ENCODE measurements at regions of chr2 and their contacts with region 1.

Region 1: GRCh38 chr2:232142049-232142448 is 180.5 kb downstream of the DIS3L2 start:
- DNase-seq: peak; percentile 19
- H3K4me3 Mint-ChIP-seq: no peak overlapping the region
- H3K27ac Mint-ChIP-seq: no peak overlapping the region
- H3K4me1 Mint-ChIP-seq: no peaks in the 10 kb centered on the region
- H3K27me3 Mint-ChIP-seq: no peaks in the 10 kb centered on the region
- CTCF ChIP-seq: peak; percentile 55

Region 2: DNA sequence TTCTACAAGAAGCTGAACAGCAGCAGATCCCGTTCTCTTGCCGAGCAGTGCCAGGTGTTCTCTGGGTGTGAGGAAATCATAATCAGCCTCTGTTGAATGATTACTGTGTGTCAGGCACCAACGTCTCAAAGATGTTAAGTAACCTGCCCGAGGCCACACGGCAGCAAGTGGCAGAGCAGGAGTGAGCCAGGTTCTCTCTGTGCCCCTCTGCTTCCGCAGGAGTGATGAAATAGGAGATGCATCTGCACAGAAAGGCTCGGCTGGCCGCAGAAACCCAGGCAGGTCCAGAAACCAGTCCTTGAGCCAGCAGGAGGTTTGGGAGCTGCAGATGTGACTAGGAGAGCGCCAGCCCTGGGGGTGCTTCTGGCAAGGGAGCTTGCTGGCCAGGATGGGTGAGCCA is 287.4 kb before region 1 on chr2:
- CTCF ChIA-PET with region 1: no interaction called
- intact Hi-C with region 1: loop called (anchors 5 kb)
- DNase-seq: no peak
- H3K4me3 Mint-ChIP-seq: no peak overlapping the region
- H3K27ac Mint-ChIP-seq: no peak overlapping the region
- H3K4me1 Mint-ChIP-seq: no peaks in the 10 kb centered on the region
- H3K27me3 Mint-ChIP-seq: peaks cover 54% of the 10 kb centered on the region
- CTCF ChIP-seq: no peak

Region 3: DNA sequence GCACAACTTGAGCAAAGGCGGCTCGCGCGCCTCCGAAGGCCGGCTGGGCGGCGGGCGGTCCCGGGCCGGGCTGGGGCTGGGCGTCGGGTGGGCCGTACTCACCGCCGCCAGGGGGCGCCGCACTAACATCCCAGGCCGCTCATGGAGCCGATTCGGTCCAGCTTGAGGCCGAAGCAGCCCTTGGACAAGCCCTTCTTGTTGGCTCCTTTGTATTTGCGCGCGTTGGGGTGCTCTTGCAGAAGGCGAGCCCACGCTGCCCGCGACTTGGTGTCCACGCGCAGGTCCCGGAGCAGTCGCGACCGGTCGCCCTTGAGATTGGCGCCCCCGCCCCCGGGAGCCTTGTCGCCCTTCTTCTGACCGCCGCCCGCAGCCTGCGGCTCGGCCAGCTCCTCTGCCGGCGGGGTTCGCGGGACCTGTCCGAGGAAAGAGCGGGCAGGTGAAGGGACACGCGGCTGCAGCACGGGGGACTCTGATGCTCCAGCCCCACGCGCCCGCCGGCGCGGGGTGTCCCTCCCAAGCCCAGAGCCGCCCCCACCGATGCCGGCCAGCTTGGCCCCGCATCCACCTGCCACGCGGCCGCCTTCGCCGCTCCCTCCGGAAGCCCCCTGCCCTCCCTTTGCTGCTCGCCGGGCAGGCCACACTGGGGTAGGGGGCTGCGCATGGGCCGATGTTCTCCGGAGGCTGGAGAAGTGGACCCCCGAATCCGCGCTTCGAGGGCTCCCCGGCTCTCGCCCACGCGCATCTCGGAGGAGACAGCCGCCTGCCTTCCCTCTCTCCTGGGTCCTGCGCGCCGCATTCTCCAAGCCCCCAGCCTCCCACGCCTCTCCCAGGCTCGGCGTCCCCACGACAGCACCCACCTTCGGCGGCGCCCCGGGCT is 216.5 kb before region 1 on chr2:
- CTCF ChIA-PET with region 1: interaction called, 11 read pairs
- intact Hi-C with region 1: loop called (anchors 1 kb)
- DNase-seq: peak; percentile 89
- H3K4me3 Mint-ChIP-seq: peak overlapping the region; percentile 64
- H3K27ac Mint-ChIP-seq: no peak overlapping the region
- H3K4me1 Mint-ChIP-seq: peaks cover 12% of the 10 kb centered on the region
- H3K27me3 Mint-ChIP-seq: peaks cover 91% of the 10 kb centered on the region
- CTCF ChIP-seq: peak; percentile 97